CD4-positive, alpha-beta T cell (primary cell): ENCODE measurements at regions of chr16 and their contacts with region 1.

Region 1: DNA sequence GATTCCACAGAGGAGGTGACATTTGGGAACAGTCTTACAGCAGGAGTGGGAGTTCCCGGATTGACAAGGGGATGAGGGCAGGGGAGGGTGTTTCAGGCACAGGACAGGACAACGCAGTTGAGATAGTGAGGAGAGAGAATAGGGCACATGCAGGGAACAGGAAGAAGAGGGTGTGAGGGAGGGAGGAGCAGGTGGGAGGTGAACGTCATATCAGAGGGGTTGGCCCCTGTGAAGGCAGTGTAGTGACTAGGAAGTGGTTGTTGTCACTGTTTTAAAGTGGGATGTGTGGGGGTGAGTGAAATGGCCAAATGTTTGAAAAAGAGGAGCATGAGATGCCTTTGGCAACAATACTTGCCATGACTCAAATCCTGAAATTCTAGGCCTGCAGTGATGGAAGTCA is 12.2 kb downstream of the PRKCB start:
- DNase-seq: peak in 11 of 14 experiments; percentile 19 to 86 (median 39)
- ATAC-seq: peak; percentile 100
- H3K4me3 ChIP-seq: no peak overlapping the region
- H3K4me3 Mint-ChIP-seq: peak overlapping the region; percentile 17
- H3K27ac ChIP-seq: peak overlapping the region in 1 of 2 donors; percentile 55
- H3K27ac Mint-ChIP-seq: peak overlapping the region; percentile 81
- H3K4me1 ChIP-seq: peaks cover 23% of the 10 kb centered on the region
- H3K4me1 Mint-ChIP-seq: peaks cover 72% of the 10 kb centered on the region
- H3K27me3 ChIP-seq: no peaks in the 10 kb centered on the region
- H3K27me3 Mint-ChIP-seq: no peaks in the 10 kb centered on the region
- CTCF ChIP-seq: no peak

Region 2: DNA sequence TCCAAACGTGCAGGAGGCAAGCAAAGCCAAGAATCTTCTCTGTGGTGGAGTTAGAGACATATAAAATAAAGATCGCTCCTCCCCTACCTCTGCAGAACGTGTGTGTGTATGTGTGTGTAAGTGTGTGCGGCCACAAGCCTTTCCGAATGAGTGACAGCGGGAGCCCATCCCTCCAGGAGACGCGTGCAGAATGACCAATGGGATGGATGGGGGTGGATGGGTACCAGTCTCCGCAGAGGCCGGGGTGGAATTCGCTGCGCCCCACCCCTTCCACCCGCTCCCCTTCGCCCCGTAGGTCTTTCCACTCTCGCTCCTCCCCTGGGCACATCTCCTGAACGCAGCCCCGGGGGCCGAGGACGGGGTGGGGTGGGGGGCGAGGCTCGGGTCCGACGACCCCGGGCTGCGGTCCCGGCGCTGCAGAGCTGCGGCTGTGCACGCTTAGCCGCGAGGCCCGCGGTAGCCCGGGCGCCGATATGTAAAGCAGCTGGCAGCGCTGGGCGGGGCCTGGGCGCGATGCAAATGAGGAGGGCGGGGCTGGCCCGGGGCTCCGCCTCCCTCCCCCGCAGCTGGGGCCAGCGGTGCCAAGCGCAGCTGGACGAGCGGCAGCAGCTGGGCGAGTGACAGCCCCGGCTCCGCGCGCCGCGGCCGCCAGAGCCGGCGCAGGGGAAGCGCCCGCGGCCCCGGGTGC is 12.4 kb before region 1 on chr16 and contains the start of gene PRKCB:
- CTCF ChIA-PET with region 1: no interaction called
- POLR2A ChIA-PET with region 1: interaction called, 4 read pairs
- intact Hi-C with region 1: loop called in 1 of 2 experiments (anchors 1 kb)
- DNase-seq: peak; percentile 79 to 95 (median 88)
- ATAC-seq: peak; percentile 86
- H3K4me3 ChIP-seq: peak within 1 kb of the TSS; percentile 82
- H3K4me3 Mint-ChIP-seq: peak within 1 kb of the TSS; percentile 99
- H3K27ac ChIP-seq: peak within 1 kb of the TSS; percentile 18 to 59
- H3K27ac Mint-ChIP-seq: peak within 1 kb of the TSS; percentile 85
- H3K4me1 ChIP-seq: peaks cover 57% of the 10 kb centered on the region
- H3K4me1 Mint-ChIP-seq: peaks cover 66% of the 10 kb centered on the region
- H3K27me3 ChIP-seq: no peaks in the 10 kb centered on the region
- H3K27me3 Mint-ChIP-seq: no peaks in the 10 kb centered on the region
- CTCF ChIP-seq: no peak
- total RNA-seq, gene PRKCB: 64.7 TPM

Region 3: GRCh38 chr16:23896832-23897821 is 49.2 kb after region 1 on chr16:
- CTCF ChIA-PET with region 1: no interaction called
- POLR2A ChIA-PET with region 1: no interaction called
- intact Hi-C with region 1: no loop called
- DNase-seq: peak in 4 of 14 experiments; percentile 10 to 52 (median 16)
- ATAC-seq: peak; percentile 26
- H3K4me3 ChIP-seq: no peak overlapping the region
- H3K4me3 Mint-ChIP-seq: peak overlapping the region; percentile 75
- H3K27ac ChIP-seq: no peak overlapping the region
- H3K27ac Mint-ChIP-seq: peak overlapping the region; percentile 50
- H3K4me1 ChIP-seq: peaks cover 30% of the 10 kb centered on the region
- H3K4me1 Mint-ChIP-seq: peaks cover 76% of the 10 kb centered on the region
- H3K27me3 ChIP-seq: no peaks in the 10 kb centered on the region
- H3K27me3 Mint-ChIP-seq: no peaks in the 10 kb centered on the region
- CTCF ChIP-seq: no peak